ENCODE measurements at regions of chr1 and their contacts with region 1.

Region 1: GRCh38 chr1:68725001-68725752 is 228.3 kb upstream of the DEPDC1 start:
- DNase-seq: peak; percentile 77
- ATAC-seq: peak; percentile 89 to 92

Region 2: DNA sequence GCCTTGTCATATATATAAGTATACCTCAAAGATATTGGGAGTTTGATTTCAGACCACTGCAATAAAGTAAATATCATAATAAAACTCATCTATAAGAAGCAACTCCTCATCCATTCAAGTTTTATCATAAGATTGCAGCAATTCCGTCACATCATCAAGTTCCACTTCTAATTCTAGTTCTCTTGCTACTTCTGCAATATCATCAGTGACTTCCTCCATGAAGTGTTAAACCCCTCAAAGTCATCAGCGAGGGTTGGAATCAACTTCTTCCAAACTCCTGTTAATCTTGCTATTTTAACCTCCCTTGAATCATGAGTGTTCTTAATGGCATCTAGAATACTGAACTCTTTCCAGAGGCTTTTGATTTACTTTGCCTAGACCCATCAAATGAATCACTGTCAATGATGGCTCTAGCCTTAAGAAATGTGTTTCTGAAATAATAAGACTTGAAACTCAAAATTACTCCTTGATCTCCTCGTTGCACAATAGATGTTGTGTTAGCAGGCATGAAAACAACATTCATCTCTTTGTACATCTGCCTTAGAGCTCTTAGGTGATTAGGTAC is 363.7 kb before region 1 on chr1:
- intact Hi-C with region 1: no loop called
- DNase-seq: no peak
- ATAC-seq: peak in 1 of 2 donors; percentile 72

Region 3: DNA sequence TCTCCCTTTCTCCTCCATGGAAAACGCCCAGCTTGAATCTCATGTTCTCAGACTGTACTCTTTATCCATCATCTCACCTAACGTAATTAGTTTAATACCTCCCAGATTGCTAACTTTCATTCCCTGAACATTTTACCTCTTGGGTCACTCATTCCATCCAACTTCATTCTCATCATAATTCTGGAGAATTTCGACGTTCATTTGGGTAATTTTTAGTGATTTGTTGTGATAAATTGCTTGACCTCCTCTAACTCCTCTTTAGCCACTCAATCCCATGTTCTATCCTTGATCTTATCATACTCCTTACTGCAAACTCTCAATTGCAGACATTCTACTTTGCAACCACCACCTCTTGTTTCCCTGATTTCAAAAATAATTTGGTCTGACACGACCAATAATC is 303.8 kb before region 1 on chr1:
- intact Hi-C with region 1: no loop called
- DNase-seq: no peak
- ATAC-seq: no peak

Region 4: GRCh38 chr1:68623700-68624099 is 101.5 kb before region 1 on chr1:
- intact Hi-C with region 1: loop called in 1 of 2 experiments (anchors 1 kb)
- DNase-seq: peak; percentile 66
- ATAC-seq: peak; percentile 91 to 97

Region 5: DNA sequence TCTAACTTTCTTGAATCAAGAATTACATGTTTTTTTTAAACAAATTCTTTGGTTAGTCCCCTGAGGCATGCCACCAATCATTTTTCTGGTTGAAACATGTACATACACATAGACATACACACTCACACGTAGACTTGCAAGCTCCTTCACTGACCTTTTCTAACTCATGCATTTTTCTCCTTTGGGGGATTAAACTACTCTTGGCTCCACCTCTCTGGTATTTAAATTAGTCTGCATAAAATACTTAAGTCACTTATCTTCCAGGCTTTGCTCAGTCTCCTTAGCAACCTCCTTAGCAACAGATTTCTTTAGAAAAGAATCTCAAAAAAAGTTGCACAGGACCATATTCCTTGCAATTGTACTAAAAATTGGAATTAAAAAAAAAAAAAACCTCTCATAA is 401.6 kb after region 1 on chr1:
- intact Hi-C with region 1: no loop called
- DNase-seq: no peak
- ATAC-seq: no peak